ENCODE measurements at regions of chr10 and their contacts with region 1.

Region 1: DNA sequence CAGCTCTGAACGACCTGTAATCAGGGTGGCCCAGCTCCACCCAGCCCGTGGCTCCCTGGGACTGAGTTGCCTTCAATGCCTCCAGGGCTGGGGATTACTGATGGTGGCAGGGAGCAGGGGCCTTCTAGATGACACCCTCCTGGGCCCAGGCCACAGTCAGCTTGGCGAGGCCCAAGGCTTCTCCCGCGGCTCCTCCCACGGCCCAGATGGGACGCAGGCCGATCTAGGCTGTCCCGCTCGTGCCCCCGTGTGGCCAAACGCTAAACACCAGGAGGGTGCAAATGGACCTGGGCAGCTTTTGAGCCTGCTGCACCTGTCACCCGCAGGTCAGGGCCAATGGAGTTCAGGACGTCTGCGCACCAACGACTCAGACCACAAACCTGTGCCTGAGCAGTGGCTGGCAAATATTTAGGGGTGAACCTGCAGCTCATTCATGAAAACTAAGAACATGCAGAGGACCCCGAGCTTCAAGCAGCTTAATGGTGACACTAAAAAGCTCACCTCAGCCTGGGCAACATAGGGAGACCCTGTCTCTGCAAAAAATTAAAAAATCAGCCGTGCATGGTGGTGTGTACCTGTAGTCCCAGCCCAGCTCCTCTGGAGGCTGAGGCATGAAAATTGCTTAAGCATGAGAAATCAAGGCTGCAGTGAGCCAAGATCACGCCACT is 43.2 kb downstream of the ASB13 start:
- DNase-seq: peak; percentile 89
- CTCF ChIP-seq: peak; percentile 92

Region 2: GRCh38 chr10:5434017-5434753 is 189.0 kb before region 1 on chr10:
- CTCF ChIA-PET with region 1: interaction called, 145 read pairs
- POLR2A ChIA-PET with region 1: no interaction called
- DNase-seq: peak; percentile 31
- CTCF ChIP-seq: peak; percentile 66

Region 3: GRCh38 chr10:5446390-5446926 is 176.8 kb before region 1 on chr10:
- CTCF ChIA-PET with region 1: interaction called, 145 read pairs
- POLR2A ChIA-PET with region 1: interaction called, 3 read pairs
- DNase-seq: peak; percentile 58
- CTCF ChIP-seq: no peak

Region 4: GRCh38 chr10:5548527-5549223 is 74.5 kb before region 1 on chr10:
- CTCF ChIA-PET with region 1: interaction called, 10 read pairs
- POLR2A ChIA-PET with region 1: no interaction called
- DNase-seq: no peak
- CTCF ChIP-seq: no peak

Region 5: GRCh38 chr10:5583525-5584175 is 39.6 kb before region 1 on chr10:
- CTCF ChIA-PET with region 1: interaction called, 17 read pairs
- POLR2A ChIA-PET with region 1: no interaction called
- DNase-seq: no peak
- CTCF ChIP-seq: no peak

Region 6: GRCh38 chr10:5591336-5591824 is 31.8 kb before region 1 on chr10:
- CTCF ChIA-PET with region 1: interaction called, 14 read pairs
- POLR2A ChIA-PET with region 1: no interaction called
- DNase-seq: no peak
- CTCF ChIP-seq: no peak

Region 7: GRCh38 chr10:5601826-5602495 is 21.3 kb before region 1 on chr10:
- CTCF ChIA-PET with region 1: interaction called, 13 read pairs
- POLR2A ChIA-PET with region 1: no interaction called
- DNase-seq: no peak
- CTCF ChIP-seq: no peak

Region 8: GRCh38 chr10:5698062-5698461 is 74.8 kb after region 1 on chr10:
- CTCF ChIA-PET with region 1: no interaction called
- POLR2A ChIA-PET with region 1: no interaction called
- DNase-seq: no peak
- CTCF ChIP-seq: no peak

Region 9: DNA sequence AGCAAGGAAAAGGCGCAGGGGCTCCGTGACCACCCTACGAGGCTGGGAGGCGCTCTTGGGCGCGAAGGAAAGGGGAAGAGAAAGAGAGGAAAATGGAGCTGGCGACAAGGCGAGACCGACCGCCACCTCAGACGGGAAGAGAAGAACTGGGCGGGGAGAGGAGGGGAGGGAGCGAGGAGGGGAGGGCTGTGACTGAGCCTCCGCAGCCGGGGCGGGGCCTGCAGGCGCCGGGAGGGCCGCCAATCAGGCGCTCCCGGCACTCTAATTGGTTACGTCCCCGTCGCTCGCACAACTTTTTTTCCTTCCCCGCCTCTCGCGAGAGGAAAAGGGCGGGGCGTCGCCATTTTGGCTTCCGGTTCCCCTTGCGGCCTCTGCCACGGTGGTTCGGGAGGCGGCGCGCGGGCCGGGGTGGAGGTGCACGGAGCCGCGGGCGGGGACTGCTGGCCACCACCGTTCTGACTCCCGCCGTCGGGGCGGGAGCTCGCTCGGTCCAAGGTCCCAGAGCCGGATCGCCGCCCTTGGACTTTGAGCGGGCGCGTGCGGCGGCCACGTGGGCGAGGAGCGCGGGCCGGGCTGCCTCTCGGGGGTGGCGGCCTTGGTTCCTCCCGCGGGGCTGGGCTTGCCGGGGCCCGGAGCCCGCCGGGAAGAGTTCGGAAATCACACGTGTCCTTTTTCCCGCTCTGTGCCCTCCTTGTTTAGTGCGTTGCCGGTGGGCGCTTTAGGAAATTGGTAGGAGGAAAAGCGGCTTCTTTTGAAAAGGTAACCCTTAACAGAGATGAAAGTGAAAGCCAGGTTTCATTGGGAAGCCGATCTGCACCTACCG is 190.3 kb after region 1 on chr10 and contains the start of gene GDI2:
- CTCF ChIA-PET with region 1: no interaction called
- POLR2A ChIA-PET with region 1: no interaction called
- DNase-seq: peak; percentile 98
- CTCF ChIP-seq: no peak